ENCODE measurements at regions of chr2 and their contacts with region 1.

Region 1: GRCh38 chr2:59449269-59449668 is 1104.2 kb downstream of the BCL11A start:
- DNase-seq: peak; percentile 51
- H3K4me3 Mint-ChIP-seq: no peak overlapping the region
- H3K27ac Mint-ChIP-seq: no peak overlapping the region
- H3K4me1 Mint-ChIP-seq: no peaks in the 10 kb centered on the region
- H3K27me3 Mint-ChIP-seq: no peaks in the 10 kb centered on the region
- CTCF ChIP-seq: peak; percentile 25

Region 2: GRCh38 chr2:59277671-59278070 is 171.6 kb before region 1 on chr2:
- CTCF ChIA-PET with region 1: no interaction called
- POLR2A ChIA-PET with region 1: no interaction called
- intact Hi-C with region 1: no loop called
- DNase-seq: peak; percentile 88
- H3K4me3 Mint-ChIP-seq: no peak overlapping the region
- H3K27ac Mint-ChIP-seq: no peak overlapping the region
- H3K4me1 Mint-ChIP-seq: peaks cover 6% of the 10 kb centered on the region
- H3K27me3 Mint-ChIP-seq: no peaks in the 10 kb centered on the region
- CTCF ChIP-seq: no peak

Region 3: GRCh38 chr2:60152226-60152833 is 703.1 kb after region 1 on chr2:
- CTCF ChIA-PET with region 1: interaction called, 10 read pairs
- POLR2A ChIA-PET with region 1: no interaction called
- intact Hi-C with region 1: no loop called
- DNase-seq: peak; percentile 43
- H3K4me3 Mint-ChIP-seq: no peak overlapping the region
- H3K27ac Mint-ChIP-seq: no peak overlapping the region
- H3K4me1 Mint-ChIP-seq: no peaks in the 10 kb centered on the region
- H3K27me3 Mint-ChIP-seq: no peaks in the 10 kb centered on the region
- CTCF ChIP-seq: peak; percentile 79

Region 4: GRCh38 chr2:60544954-60545560 is 1095.8 kb after region 1 on chr2:
- CTCF ChIA-PET with region 1: interaction called, 22 read pairs
- POLR2A ChIA-PET with region 1: interaction called, 4 read pairs
- intact Hi-C with region 1: loop called (anchors 1 kb)
- DNase-seq: no peak
- H3K4me3 Mint-ChIP-seq: no peak overlapping the region
- H3K27ac Mint-ChIP-seq: no peak overlapping the region
- H3K4me1 Mint-ChIP-seq: peaks cover 9% of the 10 kb centered on the region
- H3K27me3 Mint-ChIP-seq: no peaks in the 10 kb centered on the region
- CTCF ChIP-seq: no peak